GM10248 (cell line): ENCODE measurements at regions of chr16 and their contacts with region 1.

Region 1: GRCh38 chr16:30692381-30693064 is 6.4 kb upstream of the SRCAP start:
- DNase-seq: no peak
- CTCF ChIP-seq: no peak

Region 2: GRCh38 chr16:30482366-30482765 is 210.2 kb before region 1 on chr16:
- CTCF ChIA-PET with region 1: no interaction called
- POLR2A ChIA-PET with region 1: no interaction called
- DNase-seq: no peak
- CTCF ChIP-seq: no peak

Region 3: DNA sequence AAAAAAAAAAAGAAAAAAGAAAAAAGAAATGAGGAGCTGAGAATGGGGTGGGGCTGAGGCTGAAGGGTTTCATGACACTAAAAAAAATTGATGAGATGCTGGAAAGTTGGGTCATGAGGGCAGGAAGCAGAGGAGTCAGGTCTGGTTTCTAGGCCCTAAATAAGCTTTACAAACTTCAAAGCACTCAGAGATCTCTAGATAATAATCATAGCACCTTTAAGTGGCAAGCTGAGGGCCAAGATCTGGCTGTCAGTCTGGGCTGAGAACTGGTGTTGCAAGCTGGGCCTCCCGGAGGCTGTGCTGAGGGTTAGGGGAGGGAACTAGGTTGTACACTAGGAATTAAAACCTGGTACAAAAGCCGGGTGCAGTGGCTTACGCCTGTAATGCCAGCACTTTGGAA is 140.7 kb before region 1 on chr16:
- CTCF ChIA-PET with region 1: no interaction called
- POLR2A ChIA-PET with region 1: no interaction called
- DNase-seq: peak; percentile 50
- CTCF ChIP-seq: no peak

Region 4: GRCh38 chr16:30669896-30670797 is 22.4 kb before region 1 on chr16:
- CTCF ChIA-PET with region 1: interaction called, 13 read pairs
- POLR2A ChIA-PET with region 1: no interaction called
- DNase-seq: no peak
- CTCF ChIP-seq: peak; percentile 9

Region 5: GRCh38 chr16:30677931-30678585 is 14.5 kb before region 1 on chr16:
- CTCF ChIA-PET with region 1: interaction called, 28 read pairs
- POLR2A ChIA-PET with region 1: no interaction called
- DNase-seq: no peak
- CTCF ChIP-seq: no peak

Region 6: GRCh38 chr16:30710971-30711370 is 18.4 kb after region 1 on chr16:
- CTCF ChIA-PET with region 1: interaction called, 11 read pairs
- POLR2A ChIA-PET with region 1: interaction called, 3 read pairs
- DNase-seq: no peak
- CTCF ChIP-seq: no peak

Region 7: DNA sequence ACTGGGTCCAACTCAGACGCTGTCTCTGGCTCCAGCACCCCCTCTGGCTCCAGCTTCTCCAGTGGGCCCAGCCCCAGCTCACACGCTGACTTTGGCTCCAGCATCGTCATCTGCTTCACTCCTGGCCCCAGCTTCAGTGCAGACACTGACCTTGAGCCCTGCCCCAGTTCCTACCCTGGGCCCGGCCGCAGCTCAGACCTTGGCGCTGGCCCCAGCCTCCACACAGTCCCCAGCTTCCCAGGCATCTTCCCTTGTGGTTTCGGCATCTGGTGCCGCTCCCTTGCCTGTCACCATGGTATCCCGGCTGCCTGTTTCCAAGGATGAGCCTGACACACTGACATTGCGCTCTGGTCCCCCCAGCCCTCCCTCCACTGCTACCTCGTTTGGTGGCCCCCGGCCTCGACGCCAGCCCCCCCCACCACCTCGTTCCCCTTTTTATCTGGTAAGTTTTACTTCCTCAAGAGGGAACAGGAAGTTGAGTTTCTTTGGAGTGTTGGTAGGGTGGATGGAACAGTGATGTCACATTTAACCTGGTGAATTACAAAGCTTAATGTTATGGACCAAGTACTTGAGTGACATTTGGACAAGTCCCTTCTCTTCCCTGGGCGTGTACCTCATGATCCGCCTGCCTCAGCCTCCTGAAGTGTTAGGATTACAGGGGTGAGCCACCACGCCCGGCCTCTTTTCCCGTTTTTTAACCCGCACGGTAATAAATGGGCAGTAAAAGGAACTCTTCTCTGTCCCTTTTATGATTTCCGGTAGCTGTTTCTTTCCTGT is 32.3 kb after region 1 on chr16:
- CTCF ChIA-PET with region 1: interaction called, 10 read pairs
- POLR2A ChIA-PET with region 1: no interaction called
- DNase-seq: no peak
- CTCF ChIP-seq: no peak

Region 8: GRCh38 chr16:30740364-30741251 is 48.1 kb after region 1 on chr16:
- CTCF ChIA-PET with region 1: no interaction called
- POLR2A ChIA-PET with region 1: no interaction called
- DNase-seq: no peak
- CTCF ChIP-seq: no peak

Region 9: GRCh38 chr16:31260136-31260918 is 567.8 kb after region 1 on chr16:
- CTCF ChIA-PET with region 1: no interaction called
- POLR2A ChIA-PET with region 1: no interaction called
- DNase-seq: no peak
- CTCF ChIP-seq: no peak